Sigmoid colon (tissue), 7 donors: ENCODE measurements at regions of chr10 and their contacts with region 1.

Region 1: DNA sequence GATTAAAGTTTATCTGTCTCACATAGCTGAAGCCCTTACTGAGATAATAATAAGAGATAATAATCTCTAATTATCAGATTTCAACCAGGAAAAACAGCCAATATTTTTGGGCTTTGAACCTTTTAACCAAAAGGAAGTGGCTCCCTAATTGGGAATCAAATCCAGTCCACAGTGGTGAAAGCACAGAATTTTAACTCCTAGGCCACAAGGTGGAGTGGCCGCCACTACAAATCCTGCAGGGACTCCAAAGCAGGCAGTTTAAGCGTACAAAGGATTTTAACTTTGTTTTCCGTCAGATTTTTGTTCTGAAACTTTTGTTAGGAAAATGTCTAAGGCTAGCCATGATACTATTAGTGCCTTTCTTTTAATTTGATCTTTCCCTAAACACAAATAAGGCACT is 99.6 kb upstream of the CCNY start:
- DNase-seq: no peak
- H3K4me3 ChIP-seq: no peak overlapping the region
- H3K27ac ChIP-seq: no peak overlapping the region
- H3K4me1 ChIP-seq: no peaks in the 10 kb centered on the region
- H3K27me3 ChIP-seq: no peaks in the 10 kb centered on the region
- CTCF ChIP-seq: no peak
- EP300 ChIP-seq: no peak
- POLR2A ChIP-seq: no peak

Region 2: GRCh38 chr10:35058134-35058533 is 178.6 kb before region 1 on chr10:
- intact Hi-C with region 1: no loop called
- DNase-seq: no peak
- H3K4me3 ChIP-seq: no peak overlapping the region
- H3K27ac ChIP-seq: no peak overlapping the region
- H3K4me1 ChIP-seq: no peaks in the 10 kb centered on the region
- H3K27me3 ChIP-seq: no peaks in the 10 kb centered on the region
- CTCF ChIP-seq: no peak
- EP300 ChIP-seq: no peak
- POLR2A ChIP-seq: no peak

Region 3: GRCh38 chr10:35387768-35388167 is 151.0 kb after region 1 on chr10:
- intact Hi-C with region 1: no loop called
- DNase-seq: no peak
- H3K4me3 ChIP-seq: no peak overlapping the region
- H3K27ac ChIP-seq: peak overlapping the region in 1 of 4 donors; percentile 9
- H3K4me1 ChIP-seq: peaks cover 0 to 38% (median 31%) of the 10 kb centered on the region in 4 donors
- H3K27me3 ChIP-seq: no peaks in the 10 kb centered on the region
- CTCF ChIP-seq: no peak
- EP300 ChIP-seq: no peak
- POLR2A ChIP-seq: no peak

Region 4: DNA sequence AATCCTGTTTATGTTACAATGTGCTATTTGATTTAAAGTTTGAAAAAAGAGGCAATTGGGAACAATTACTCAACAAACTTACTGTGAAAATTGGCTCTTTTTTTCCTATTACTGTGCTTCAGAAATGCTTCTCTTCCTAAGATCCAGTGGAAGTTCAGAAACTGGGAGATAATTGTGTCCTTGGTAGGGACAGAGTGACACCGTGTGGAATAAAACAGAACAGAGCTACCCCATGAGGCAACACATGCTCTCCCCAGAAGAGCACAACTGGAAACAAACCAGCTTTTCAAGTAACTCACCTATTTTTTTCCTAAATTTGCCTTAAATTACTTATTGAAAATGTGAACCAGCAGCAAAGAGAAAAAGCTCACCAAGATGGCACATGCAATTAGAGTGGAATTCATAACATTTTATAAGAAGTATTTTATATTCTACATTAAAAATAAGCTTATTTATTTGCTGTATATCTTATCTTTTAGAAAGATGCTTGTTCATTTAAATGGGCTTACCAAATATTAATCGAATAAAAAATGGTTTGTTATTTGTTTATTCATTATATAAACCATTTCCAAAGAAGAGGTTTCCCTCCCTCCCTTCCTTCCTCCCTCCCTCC is 1542.6 kb after region 1 on chr10:
- intact Hi-C with region 1: loop called (anchors 10 kb)
- DNase-seq: no peak
- H3K4me3 ChIP-seq: no peak overlapping the region
- H3K27ac ChIP-seq: no peak overlapping the region
- H3K4me1 ChIP-seq: no peaks in the 10 kb centered on the region
- H3K27me3 ChIP-seq: no peaks in the 10 kb centered on the region
- CTCF ChIP-seq: peak; percentile 74 to 87 (median 82)
- EP300 ChIP-seq: no peak
- POLR2A ChIP-seq: no peak